Natural killer cell (primary cell): ENCODE measurements at regions of chr7 and their contacts with region 1.

Region 1: GRCh38 chr7:139075031-139075652 is 34.4 kb downstream of the ZC3HAV1 start:
- DNase-seq: peak; percentile 48 to 92
- ATAC-seq: peak; percentile 81 to 87 (median 82)
- H3K4me3 ChIP-seq: no peak overlapping the region
- H3K4me3 Mint-ChIP-seq: peak overlapping the region; percentile 17
- H3K27ac ChIP-seq: peak overlapping the region; percentile 66
- H3K27ac Mint-ChIP-seq: peak overlapping the region; percentile 78 to 83
- H3K4me1 ChIP-seq: peaks cover 30% of the 10 kb centered on the region
- H3K4me1 Mint-ChIP-seq: peaks cover 43 to 54% of the 10 kb centered on the region in 2 donors
- H3K27me3 ChIP-seq: no peaks in the 10 kb centered on the region
- H3K27me3 Mint-ChIP-seq: no peaks in the 10 kb centered on the region
- CTCF ChIP-seq: peak; percentile 85

Region 2: GRCh38 chr7:138797841-138798271 is 277.3 kb before region 1 on chr7 and contains the starts of genes ATP6V0A4 and TMEM213:
- intact Hi-C with region 1: no loop called
- DNase-seq: peak in 1 of 2 donors; percentile 30
- ATAC-seq: peak in 2 of 3 donors; percentile 29 to 42
- H3K4me3 ChIP-seq: no peak within 1 kb of the TSS
- H3K4me3 Mint-ChIP-seq: peak within 1 kb of the TSS; percentile 13
- H3K27ac ChIP-seq: no peak within 1 kb of the TSS
- H3K27ac Mint-ChIP-seq: no peak within 1 kb of the TSS
- H3K4me1 ChIP-seq: peaks cover 14% of the 10 kb centered on the region
- H3K4me1 Mint-ChIP-seq: peaks cover 5% of the 10 kb centered on the region in 2 donors
- H3K27me3 ChIP-seq: no peaks in the 10 kb centered on the region
- H3K27me3 Mint-ChIP-seq: peaks cover 2 to 5% of the 10 kb centered on the region in 2 donors
- CTCF ChIP-seq: no peak
- total RNA-seq, gene ATP6V0A4: not detected
- total RNA-seq, gene TMEM213: not detected

Region 3: DNA sequence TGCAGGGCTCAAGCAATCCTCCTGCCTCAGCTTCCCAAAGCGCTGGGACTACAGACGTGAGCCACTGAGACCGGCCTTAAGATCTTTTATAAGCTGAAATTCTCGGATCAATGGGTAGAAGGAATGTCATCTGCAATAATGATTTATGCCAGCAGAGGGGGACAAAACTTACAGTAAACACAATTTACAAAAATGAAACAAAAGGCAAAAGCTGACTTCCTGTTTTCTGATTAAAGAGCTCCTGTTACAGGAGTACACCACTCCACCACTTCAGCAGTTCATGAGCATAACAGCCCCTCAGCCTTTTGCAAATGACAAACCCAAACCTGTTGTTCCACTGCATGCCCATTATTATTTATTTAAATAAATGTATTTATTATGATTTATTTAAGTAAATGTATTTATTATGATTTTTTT is 188.6 kb before region 1 on chr7:
- intact Hi-C with region 1: loop called (anchors 1 kb)
- DNase-seq: peak in 1 of 2 donors; percentile 87
- ATAC-seq: peak; percentile 77 to 97 (median 87)
- H3K4me3 ChIP-seq: no peak overlapping the region
- H3K4me3 Mint-ChIP-seq: no peak overlapping the region
- H3K27ac ChIP-seq: peak overlapping the region; percentile 22
- H3K27ac Mint-ChIP-seq: peak overlapping the region; percentile 51 to 81
- H3K4me1 ChIP-seq: peaks cover 5% of the 10 kb centered on the region
- H3K4me1 Mint-ChIP-seq: peaks cover 5 to 6% of the 10 kb centered on the region in 2 donors
- H3K27me3 ChIP-seq: no peaks in the 10 kb centered on the region
- H3K27me3 Mint-ChIP-seq: peaks cover 0 to 15% of the 10 kb centered on the region in 2 donors
- CTCF ChIP-seq: peak; percentile 82

Region 4: GRCh38 chr7:139016931-139017511 is 58.1 kb before region 1 on chr7:
- intact Hi-C with region 1: loop called (anchors 1 kb)
- DNase-seq: peak; percentile 42 to 83
- ATAC-seq: peak; percentile 87 to 95 (median 94)
- H3K4me3 ChIP-seq: no peak overlapping the region
- H3K4me3 Mint-ChIP-seq: no peak overlapping the region
- H3K27ac ChIP-seq: no peak overlapping the region
- H3K27ac Mint-ChIP-seq: no peak overlapping the region
- H3K4me1 ChIP-seq: no peaks in the 10 kb centered on the region
- H3K4me1 Mint-ChIP-seq: peaks cover 0 to 5% of the 10 kb centered on the region in 2 donors
- H3K27me3 ChIP-seq: no peaks in the 10 kb centered on the region
- H3K27me3 Mint-ChIP-seq: peaks cover 0 to 11% of the 10 kb centered on the region in 2 donors
- CTCF ChIP-seq: peak; percentile 64

Region 5: DNA sequence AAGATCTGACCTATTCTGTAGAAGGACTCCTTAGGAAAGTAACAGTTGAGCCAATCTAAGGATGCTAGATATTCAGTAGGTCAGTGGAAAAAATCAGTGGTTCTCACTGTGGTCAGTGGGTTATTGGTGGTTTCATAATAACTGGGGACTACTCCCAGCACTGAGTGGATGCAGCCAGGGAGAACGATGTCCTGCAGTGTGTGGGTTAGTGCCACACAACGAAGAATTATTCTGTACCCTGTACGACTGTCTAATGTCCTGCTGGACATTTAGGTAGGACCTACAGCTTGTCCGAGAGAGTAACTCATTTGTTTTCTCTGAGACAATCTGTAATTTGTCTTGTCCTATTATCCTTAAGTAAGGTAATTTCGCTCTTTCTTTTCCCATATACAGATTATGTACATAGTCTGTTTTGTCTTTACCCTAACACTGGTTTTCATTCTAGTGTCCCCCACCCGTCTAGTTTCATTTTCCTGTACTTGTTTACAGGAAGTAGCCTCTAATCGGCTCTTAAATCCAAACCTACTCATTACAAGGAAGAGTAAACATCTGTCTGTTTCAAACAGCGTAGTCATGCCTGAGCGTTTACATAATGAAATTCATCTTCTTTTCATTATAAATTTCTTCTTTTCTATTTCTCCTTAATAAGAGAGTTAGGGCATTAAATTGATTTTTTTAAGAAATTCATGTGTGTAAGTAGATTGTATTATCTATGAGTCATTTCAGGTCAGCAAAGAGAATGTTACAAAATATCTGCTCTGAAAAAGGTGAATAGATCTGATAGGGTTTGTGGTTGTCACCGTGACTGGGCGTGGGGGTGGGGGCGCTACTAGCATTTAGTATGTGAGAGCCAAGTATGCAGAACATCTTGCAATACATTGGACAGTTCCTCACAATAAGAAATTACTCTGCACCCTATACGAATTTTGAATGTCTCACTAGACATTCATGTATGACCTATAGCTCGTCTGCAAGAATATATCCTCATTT is 31.0 kb before region 1 on chr7:
- intact Hi-C with region 1: loop called (anchors 1 kb)
- DNase-seq: peak; percentile 72 to 77
- ATAC-seq: peak; percentile 84 to 89 (median 86)
- H3K4me3 ChIP-seq: no peak overlapping the region
- H3K4me3 Mint-ChIP-seq: peak overlapping the region; percentile 88
- H3K27ac ChIP-seq: peak overlapping the region; percentile 73
- H3K27ac Mint-ChIP-seq: peak overlapping the region; percentile 86 to 91
- H3K4me1 ChIP-seq: peaks cover 17% of the 10 kb centered on the region
- H3K4me1 Mint-ChIP-seq: peaks cover 47 to 59% of the 10 kb centered on the region in 2 donors
- H3K27me3 ChIP-seq: no peaks in the 10 kb centered on the region
- H3K27me3 Mint-ChIP-seq: no peaks in the 10 kb centered on the region
- CTCF ChIP-seq: no peak

Region 6: DNA sequence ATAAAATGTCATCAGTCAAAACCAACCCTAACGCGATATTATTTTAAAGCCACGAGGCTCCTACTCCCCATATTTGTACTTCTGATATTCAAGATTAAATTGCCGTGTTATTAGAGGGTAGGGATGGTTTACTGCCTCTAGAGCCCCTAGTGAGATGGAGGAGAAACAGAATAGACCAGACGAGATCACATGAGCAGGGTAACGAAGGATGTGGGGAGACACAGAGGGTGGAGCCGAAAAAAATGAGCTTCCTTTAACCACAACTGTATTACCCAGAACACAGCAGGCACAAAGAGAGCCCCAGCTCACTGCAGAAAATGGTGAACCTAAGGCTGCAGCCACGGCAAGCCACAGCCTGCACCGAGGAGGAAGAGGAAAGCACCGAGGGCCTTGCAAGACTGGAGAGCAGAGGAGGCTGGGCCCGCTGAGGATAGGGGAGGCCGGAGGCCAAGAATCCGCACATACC is 20.1 kb after region 1 on chr7:
- intact Hi-C with region 1: no loop called
- DNase-seq: peak; percentile 70 to 95
- ATAC-seq: peak; percentile 85 to 96 (median 95)
- H3K4me3 ChIP-seq: peak overlapping the region; percentile 21
- H3K4me3 Mint-ChIP-seq: peak overlapping the region; percentile 90
- H3K27ac ChIP-seq: peak overlapping the region; percentile 71
- H3K27ac Mint-ChIP-seq: peak overlapping the region; percentile 86 to 95
- H3K4me1 ChIP-seq: peaks cover 70% of the 10 kb centered on the region
- H3K4me1 Mint-ChIP-seq: peaks cover 70 to 79% of the 10 kb centered on the region in 2 donors
- H3K27me3 ChIP-seq: no peaks in the 10 kb centered on the region
- H3K27me3 Mint-ChIP-seq: no peaks in the 10 kb centered on the region
- CTCF ChIP-seq: no peak

Region 7: DNA sequence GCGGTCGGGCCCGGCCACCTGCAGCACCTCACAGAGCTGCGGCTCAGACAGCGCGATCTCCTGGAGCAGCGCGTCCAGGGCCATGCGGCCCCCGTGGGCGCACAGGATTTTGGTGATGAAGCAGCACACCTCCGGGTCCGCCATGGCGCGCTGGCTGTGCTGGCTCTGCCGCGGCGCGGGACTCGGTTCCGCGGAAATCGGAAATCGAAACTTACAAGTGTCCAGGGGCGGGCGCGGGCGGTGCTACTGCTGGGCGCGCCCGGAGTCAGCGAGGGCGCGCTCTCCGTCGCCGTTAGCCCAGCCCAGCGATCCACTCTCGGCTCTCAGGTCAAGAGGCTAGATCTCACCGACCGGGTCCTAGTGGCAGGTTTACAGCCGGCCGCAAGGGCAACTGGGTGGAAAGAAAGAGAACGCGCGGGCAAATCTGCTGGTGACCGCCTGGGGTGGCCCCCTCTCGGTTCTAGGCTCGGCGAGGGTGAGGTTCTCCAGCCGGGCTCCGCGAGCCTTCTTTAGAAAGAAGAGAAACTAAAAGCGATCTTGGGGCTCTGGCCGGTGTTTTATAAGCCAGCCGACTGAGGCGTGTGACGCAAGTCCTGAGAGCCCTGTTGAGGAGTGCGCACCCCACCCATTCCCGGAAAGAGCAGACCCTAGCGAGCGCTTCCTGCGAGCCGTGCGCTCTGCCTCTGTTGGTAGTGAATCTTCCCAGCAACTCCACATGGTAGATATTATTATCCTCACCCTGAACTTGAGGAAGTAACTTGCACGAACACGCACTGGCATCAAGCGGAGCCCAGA is 34.2 kb after region 1 on chr7 and contains the start of gene ZC3HAV1:
- intact Hi-C with region 1: loop called (anchors 5 kb)
- DNase-seq: peak; percentile 83 to 97
- ATAC-seq: peak; percentile 80 to 91 (median 83)
- H3K4me3 ChIP-seq: peak within 1 kb of the TSS; percentile 91
- H3K4me3 Mint-ChIP-seq: peak within 1 kb of the TSS; percentile 97
- H3K27ac ChIP-seq: peak within 1 kb of the TSS; percentile 89
- H3K27ac Mint-ChIP-seq: peak within 1 kb of the TSS; percentile 96 to 99
- H3K4me1 ChIP-seq: peaks cover 17% of the 10 kb centered on the region
- H3K4me1 Mint-ChIP-seq: peaks cover 50 to 51% of the 10 kb centered on the region in 2 donors
- H3K27me3 ChIP-seq: no peaks in the 10 kb centered on the region
- H3K27me3 Mint-ChIP-seq: no peaks in the 10 kb centered on the region
- CTCF ChIP-seq: no peak
- total RNA-seq, gene ZC3HAV1: 129 to 153 (median 137) TPM

Region 8: DNA sequence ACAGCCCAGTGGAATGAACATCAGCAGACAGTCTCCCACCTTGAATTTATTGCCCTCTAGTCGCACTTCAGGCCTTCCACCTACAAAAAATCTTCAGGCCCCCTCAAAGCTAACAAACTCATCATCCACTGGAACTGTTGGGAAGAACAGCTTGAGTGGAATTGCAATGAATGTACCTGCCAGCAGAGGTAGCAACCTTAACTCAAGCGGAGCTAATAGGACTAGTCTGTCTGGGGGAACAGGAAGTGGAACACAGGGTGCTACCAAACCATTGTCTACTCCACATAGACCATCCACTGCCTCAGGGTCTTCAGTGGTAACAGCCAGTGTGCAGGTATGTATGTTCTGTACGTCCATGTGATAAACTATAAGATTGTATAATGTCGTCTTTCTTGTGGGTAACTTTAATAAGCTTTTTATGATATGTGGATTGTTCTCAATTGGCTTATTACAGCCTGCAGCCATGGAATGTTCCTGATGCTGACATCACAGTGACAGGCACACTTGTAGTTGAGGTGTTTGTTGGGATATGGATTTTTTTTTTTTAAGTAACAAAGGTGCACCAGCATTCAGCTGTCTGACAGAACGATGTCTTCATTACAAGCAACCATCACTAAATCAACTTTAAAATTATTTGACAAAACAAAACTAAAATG is 209.2 kb after region 1 on chr7:
- intact Hi-C with region 1: no loop called
- DNase-seq: peak in 1 of 2 donors; percentile 4
- ATAC-seq: no peak
- H3K4me3 ChIP-seq: no peak overlapping the region
- H3K4me3 Mint-ChIP-seq: no peak overlapping the region
- H3K27ac ChIP-seq: no peak overlapping the region
- H3K27ac Mint-ChIP-seq: no peak overlapping the region
- H3K4me1 ChIP-seq: no peaks in the 10 kb centered on the region
- H3K4me1 Mint-ChIP-seq: no peaks in the 10 kb centered on the region
- H3K27me3 ChIP-seq: no peaks in the 10 kb centered on the region
- H3K27me3 Mint-ChIP-seq: no peaks in the 10 kb centered on the region
- CTCF ChIP-seq: no peak